CD4-positive, alpha-beta memory T cell (primary cell): ENCODE measurements at regions of chr2 and their contacts with region 1.

Region 1: DNA sequence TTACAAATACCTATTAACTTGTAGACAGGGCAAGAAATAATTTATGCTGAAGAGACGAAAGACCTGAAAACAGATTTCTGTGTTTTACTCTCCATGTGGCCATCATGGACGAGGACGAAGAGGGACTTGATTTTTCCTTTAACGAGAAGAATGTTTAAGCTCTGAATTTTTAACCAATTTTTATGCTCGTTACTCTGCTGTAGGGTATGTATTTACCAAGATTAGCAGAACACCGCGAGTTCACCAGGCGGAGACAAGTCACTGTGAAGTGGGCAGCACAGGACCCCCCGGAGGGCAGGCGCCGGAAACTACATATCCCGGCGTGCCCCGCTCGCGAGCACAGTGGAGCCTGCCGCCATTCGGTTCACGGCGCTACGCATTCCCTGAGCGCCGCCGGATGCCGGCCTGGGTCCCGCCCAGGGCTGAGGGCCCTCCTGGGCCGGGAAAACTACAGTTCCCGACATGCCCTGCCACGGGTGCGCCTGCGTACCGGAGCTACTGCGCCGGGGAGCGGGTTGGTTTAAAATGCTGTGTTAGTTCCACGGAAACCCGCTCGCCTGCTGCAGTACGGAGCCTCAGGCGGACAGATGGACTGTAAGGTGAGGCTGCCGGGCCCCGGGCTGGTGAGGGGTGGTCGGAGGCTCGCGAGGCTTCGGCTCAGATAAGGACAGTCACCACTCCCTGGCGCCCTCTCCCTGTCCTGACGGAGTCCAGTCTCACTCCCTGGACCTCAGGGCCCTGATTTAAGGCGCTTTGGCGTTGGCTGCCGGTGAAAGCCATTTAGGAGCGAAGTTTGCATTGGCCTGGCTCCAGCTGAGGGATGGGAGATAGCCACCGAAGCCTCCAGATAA is at the start of gene CCDC150:
- DNase-seq: peak; percentile 92 to 94 (median 94)
- H3K4me3 ChIP-seq: peak within 1 kb of the TSS; percentile 69 to 79
- H3K4me3 Mint-ChIP-seq: peak within 1 kb of the TSS; percentile 83 to 93 (median 90)
- H3K27ac ChIP-seq: peak within 1 kb of the TSS; percentile 39
- H3K27ac Mint-ChIP-seq: peak within 1 kb of the TSS; percentile 39 to 87 (median 72)
- H3K4me1 ChIP-seq: peaks cover 9% of the 10 kb centered on the region
- H3K4me1 Mint-ChIP-seq: peaks cover 8 to 20% (median 13%) of the 10 kb centered on the region in 4 donors
- H3K27me3 ChIP-seq: no peaks in the 10 kb centered on the region
- H3K27me3 Mint-ChIP-seq: peaks cover 0 to 4% of the 10 kb centered on the region in 2 donors
- total RNA-seq, gene CCDC150: 0.44 to 0.87 TPM

Region 2: DNA sequence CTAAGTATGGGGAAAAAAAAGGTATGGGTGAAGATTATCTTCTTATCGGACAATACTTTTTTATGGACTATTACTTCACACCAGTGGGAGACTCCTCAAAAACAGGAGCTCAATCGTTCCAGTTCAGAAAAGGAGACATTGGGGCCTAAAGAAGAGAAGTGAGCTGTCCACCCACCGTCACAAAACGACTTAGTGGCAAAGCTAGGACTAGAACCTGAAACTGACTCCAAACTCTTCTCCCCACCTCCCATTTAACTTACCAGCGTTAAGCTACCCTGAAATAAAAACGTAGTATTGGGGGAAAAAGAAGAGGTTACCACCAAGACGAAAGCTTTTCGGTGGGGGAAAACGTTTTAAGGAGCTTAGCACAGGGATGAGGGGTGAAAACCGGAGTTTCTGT is 159.6 kb after region 1 on chr2:
- CTCF ChIA-PET with region 1: no interaction called
- POLR2A ChIA-PET with region 1: no interaction called
- intact Hi-C with region 1: loop called (anchors 1 kb)
- DNase-seq: peak in 1 of 5 donors; percentile 1
- H3K4me3 ChIP-seq: peak overlapping the region; percentile 83 to 88
- H3K4me3 Mint-ChIP-seq: peak overlapping the region; percentile 95 to 100 (median 98)
- H3K27ac ChIP-seq: peak overlapping the region; percentile 58
- H3K27ac Mint-ChIP-seq: peak overlapping the region; percentile 77 to 99 (median 96)
- H3K4me1 ChIP-seq: peaks cover 14% of the 10 kb centered on the region
- H3K4me1 Mint-ChIP-seq: peaks cover 19 to 41% (median 28%) of the 10 kb centered on the region in 4 donors
- H3K27me3 ChIP-seq: no peaks in the 10 kb centered on the region
- H3K27me3 Mint-ChIP-seq: peaks cover 0 to 3% of the 10 kb centered on the region in 2 donors